Tibial artery (tissue), 4 donors: ENCODE measurements at regions of chr5 and their contacts with region 1.

Region 1: DNA sequence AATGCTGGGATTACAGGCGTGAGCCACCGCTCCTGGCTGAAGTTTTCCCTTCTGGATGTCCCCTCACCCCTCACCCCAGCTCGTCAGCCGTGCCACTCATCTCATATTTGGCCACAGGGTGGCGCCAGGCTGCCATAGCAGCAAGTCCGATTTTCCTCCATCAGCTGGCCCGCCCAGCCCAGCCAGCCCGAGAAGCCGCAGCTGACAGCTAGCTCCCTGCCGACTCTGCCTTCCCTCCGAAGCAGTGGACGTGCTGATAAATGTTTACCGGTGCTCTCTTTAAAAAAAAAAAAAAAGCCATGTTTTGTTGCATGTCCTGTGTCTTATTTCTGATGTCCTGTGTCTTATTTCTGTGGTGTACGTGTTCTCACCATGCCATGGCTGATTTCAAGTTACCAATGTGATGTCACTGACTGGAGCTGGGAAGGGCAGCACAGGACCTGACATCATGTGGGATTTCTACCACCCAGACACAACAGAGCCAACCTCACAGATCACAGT is 58.3 kb downstream of the PFDN1 start:
- DNase-seq: peak; percentile 89 to 93
- H3K4me3 ChIP-seq: no peak overlapping the region
- H3K27ac ChIP-seq: no peak overlapping the region
- H3K4me1 ChIP-seq: peaks cover 0 to 49% (median 39%) of the 10 kb centered on the region in 4 donors
- H3K27me3 ChIP-seq: no peaks in the 10 kb centered on the region
- CTCF ChIP-seq: peak; percentile 87 to 93

Region 2: GRCh38 chr5:140094889-140095288 is 149.7 kb before region 1 on chr5:
- intact Hi-C with region 1: no loop called
- DNase-seq: no peak
- H3K4me3 ChIP-seq: no peak overlapping the region
- H3K27ac ChIP-seq: no peak overlapping the region
- H3K4me1 ChIP-seq: no peaks in the 10 kb centered on the region
- H3K27me3 ChIP-seq: no peaks in the 10 kb centered on the region
- CTCF ChIP-seq: no peak

Region 3: DNA sequence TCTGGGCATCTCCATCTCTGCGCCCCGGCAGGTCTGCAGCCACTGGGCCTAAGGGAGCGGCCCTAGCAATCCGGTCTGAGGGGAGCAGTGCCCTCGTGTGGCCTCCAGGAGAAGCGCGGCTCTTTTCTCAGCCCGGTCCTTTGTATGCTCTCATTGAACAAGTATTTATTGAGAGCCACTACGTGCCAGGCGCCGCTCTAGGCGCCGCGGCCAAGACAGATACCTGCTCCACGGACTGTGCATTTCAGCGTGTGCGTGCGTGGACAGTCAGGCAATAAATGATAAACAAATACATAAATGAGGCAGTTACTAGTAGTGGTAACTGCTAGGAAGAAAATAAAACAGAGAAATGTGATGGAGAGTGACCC is 113.1 kb after region 1 on chr5:
- intact Hi-C with region 1: loop called (anchors 2 kb)
- DNase-seq: peak; percentile 78 to 89
- H3K4me3 ChIP-seq: peak overlapping the region in 1 of 2 donors; percentile 37
- H3K27ac ChIP-seq: no peak overlapping the region
- H3K4me1 ChIP-seq: peaks cover 0 to 8% (median 2%) of the 10 kb centered on the region in 4 donors
- H3K27me3 ChIP-seq: no peaks in the 10 kb centered on the region
- CTCF ChIP-seq: peak; percentile 83 to 95